Ascending aorta (tissue), 2 donors: ENCODE measurements at regions of chr2 and their contacts with region 1.

Region 1: GRCh38 chr2:163231666-163232065 is 393.1 kb upstream of the KCNH7 start:
- DNase-seq: no peak
- H3K4me3 ChIP-seq: no peak overlapping the region
- H3K27ac ChIP-seq: no peak overlapping the region
- H3K4me1 ChIP-seq: no peaks in the 10 kb centered on the region
- H3K27me3 ChIP-seq: no peaks in the 10 kb centered on the region
- CTCF ChIP-seq: no peak

Region 2: GRCh38 chr2:162623888-162624287 is 607.8 kb before region 1 on chr2:
- intact Hi-C with region 1: loop called (anchors 5 kb)
- DNase-seq: no peak
- H3K4me3 ChIP-seq: no peak overlapping the region
- H3K27ac ChIP-seq: no peak overlapping the region
- H3K4me1 ChIP-seq: no peaks in the 10 kb centered on the region
- H3K27me3 ChIP-seq: no peaks in the 10 kb centered on the region
- CTCF ChIP-seq: no peak

Region 3: DNA sequence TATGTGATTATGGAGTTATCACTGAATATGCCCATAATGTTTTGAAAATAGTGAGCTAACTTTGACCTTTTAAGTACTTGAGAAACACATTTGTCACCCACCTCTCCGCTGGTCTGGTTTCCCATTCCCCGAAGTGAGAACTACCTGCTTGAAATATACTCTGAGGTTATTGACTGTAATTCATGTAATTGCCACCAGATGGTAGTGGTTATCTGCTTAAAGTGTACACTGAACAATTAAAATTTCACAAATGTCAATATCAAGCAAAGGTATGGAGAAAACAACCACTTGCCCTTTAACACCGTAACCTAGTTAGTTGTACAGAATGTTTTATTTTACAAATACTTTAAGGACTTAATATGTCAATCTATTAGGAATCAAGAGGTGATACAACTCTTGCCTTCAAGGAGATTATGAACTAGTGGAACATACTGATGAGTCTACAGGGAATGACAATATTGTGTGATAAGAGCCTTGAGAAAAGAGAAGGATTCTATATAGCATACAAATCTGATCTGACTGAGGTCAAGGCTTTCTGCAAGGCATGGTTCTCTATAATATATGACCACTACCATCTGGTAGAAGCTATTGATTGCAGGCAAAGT is 76.3 kb before region 1 on chr2:
- intact Hi-C with region 1: no loop called
- DNase-seq: no peak
- H3K4me3 ChIP-seq: no peak overlapping the region
- H3K27ac ChIP-seq: no peak overlapping the region
- H3K4me1 ChIP-seq: no peaks in the 10 kb centered on the region
- H3K27me3 ChIP-seq: no peaks in the 10 kb centered on the region
- CTCF ChIP-seq: peak in 2 of 3 experiments; percentile 38 to 46

Region 4: DNA sequence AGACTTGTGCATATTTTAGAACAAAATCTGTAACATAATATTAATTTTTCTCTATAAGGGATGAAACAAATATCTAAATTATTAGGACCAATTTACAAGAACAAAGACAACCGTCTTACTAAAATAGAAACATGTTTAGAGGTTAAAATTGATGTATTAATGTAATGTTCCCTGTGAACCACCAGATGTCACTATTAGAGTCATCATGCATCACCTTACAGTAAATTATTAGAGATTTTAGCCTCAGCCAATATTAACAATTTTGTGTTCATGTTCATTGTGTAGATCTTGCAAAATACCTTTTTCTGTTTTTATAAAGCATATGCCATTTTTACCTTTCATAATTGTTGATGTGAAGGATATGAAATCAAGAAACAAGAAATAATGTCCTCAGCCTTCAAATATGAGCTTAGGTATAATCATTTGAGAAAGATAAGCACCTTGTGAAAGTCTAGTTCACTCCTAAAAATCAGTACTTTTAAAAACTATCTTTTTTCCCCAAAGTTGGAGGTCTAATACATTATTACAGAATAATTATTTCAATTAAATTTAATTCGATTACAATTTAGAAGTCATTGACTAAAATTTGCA is 48.8 kb before region 1 on chr2:
- intact Hi-C with region 1: no loop called
- DNase-seq: no peak
- H3K4me3 ChIP-seq: no peak overlapping the region
- H3K27ac ChIP-seq: no peak overlapping the region
- H3K4me1 ChIP-seq: no peaks in the 10 kb centered on the region
- H3K27me3 ChIP-seq: no peaks in the 10 kb centered on the region
- CTCF ChIP-seq: peak in 2 of 3 experiments; percentile 36 to 49